Activated CD8-positive, alpha-beta T cell treated with anti-CD3 and anti-CD28 coated beads for 36 hours (primary cell): ENCODE measurements at regions of chr3 and their contacts with region 1.

Region 1: GRCh38 chr3:4633078-4634004 is 140.2 kb downstream of the ITPR1 start:
- DNase-seq: no peak
- ATAC-seq: peak; percentile 65
- H3K4me3 Mint-ChIP-seq: no peak overlapping the region
- H3K27ac Mint-ChIP-seq: peak overlapping the region; percentile 36
- H3K4me1 Mint-ChIP-seq: peaks cover 7% of the 10 kb centered on the region
- H3K27me3 Mint-ChIP-seq: no peaks in the 10 kb centered on the region
- CTCF ChIP-seq: peak; percentile 95

Region 2: DNA sequence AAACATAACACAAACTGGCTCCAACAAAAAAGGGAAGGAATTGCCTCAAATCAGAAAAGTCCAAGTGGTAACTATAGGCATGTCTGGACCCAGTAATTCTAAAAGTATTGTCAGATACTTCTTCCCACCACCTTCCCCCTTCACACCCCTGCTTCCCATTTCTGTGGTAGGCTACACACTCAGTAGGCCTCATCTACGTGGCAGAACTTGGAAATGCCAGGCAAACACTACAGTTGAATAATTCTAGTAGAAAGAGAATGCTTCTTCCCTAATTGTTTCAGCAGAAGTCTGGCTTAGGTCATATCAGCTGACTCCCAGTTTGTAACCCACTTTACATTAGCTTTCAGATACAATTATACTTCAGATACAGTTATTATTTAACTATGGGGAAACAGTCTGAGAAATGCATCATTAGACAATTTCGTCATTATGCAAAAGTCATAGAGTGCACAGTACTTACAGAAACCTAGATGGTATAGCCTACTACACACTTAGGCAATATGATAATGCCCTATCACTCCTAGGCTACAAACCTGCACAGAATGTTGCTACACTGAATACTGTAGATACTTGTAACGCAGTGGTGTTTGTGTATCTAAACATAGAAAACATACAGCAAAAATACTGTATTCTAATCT is 323.7 kb before region 1 on chr3:
- CTCF ChIA-PET with region 1: interaction called, 13 read pairs
- POLR2A ChIA-PET with region 1: no interaction called
- intact Hi-C with region 1: no loop called
- DNase-seq: no peak
- ATAC-seq: no peak
- H3K4me3 Mint-ChIP-seq: no peak overlapping the region
- H3K27ac Mint-ChIP-seq: no peak overlapping the region
- H3K4me1 Mint-ChIP-seq: peaks cover 22% of the 10 kb centered on the region
- H3K27me3 Mint-ChIP-seq: no peaks in the 10 kb centered on the region
- CTCF ChIP-seq: no peak

Region 3: DNA sequence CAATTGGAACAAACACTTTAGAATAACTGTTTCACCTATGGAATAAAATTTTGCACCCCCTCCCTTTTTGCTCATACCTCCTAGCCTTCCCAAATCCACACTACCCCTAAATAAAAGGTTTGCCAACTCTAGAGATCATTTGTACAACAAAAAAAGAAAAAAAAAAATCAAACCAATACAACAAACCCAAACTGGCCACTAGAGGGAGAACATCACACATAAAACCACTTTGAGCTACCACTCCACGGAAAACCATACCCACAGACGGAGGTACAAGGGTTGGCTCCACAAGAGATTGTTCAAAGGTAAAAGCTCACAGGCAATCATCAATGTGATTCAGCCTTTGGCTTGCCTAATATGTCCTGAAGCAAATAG is 282.6 kb before region 1 on chr3:
- CTCF ChIA-PET with region 1: interaction called, 68 read pairs
- POLR2A ChIA-PET with region 1: interaction called, 5 read pairs
- intact Hi-C with region 1: loop called (anchors 1 kb)
- DNase-seq: peak; percentile 60
- ATAC-seq: peak; percentile 71
- H3K4me3 Mint-ChIP-seq: peak overlapping the region; percentile 67
- H3K27ac Mint-ChIP-seq: peak overlapping the region; percentile 40
- H3K4me1 Mint-ChIP-seq: peaks cover 19% of the 10 kb centered on the region
- H3K27me3 Mint-ChIP-seq: no peaks in the 10 kb centered on the region
- CTCF ChIP-seq: peak; percentile 93

Region 4: DNA sequence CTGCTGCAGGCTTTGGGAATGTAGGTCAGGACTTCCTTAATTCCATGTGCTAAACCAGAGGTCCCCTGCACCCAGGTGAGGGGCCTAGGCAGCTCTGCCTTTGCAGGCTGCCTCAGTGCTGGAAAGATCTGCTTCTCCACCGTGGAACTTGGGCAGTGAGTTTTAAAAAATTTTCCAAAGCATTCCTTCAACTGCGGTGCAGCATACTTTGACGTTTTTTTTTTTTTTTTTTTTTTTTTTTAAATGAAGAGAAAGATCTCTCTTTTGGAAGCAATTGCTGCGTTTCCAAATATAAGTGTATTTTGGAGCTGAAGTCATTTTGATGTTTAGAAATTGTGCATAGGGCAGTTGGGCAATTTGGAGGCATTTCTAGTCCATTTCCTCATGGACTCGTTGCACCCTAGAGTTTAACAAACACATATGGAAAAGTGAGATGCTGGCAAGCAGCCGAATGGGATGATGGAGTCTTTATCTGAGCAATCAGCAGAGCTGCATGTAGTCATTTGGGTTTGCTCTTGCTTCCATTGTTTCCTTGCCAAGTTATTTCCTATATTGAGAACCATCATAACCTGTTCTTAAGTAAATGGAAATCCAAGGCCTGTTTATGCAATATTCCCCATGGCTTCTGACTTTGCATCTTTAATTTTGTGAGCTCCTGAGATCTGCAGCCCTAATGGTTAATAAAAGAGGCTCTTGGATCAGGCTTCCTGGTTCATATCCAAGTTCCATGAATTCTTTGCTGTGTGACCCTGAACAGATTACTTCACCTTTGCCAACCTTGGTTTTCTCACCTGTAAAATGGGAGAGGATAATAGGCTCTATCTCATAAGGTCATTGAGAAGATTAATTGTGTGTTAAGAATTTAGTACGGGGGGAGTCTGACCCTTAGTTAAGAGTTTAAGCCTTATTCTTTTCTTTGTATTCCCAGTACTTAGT is 109.0 kb before region 1 on chr3:
- CTCF ChIA-PET with region 1: interaction called, 131 read pairs
- POLR2A ChIA-PET with region 1: no interaction called
- intact Hi-C with region 1: loop called (anchors 1 kb)
- DNase-seq: no peak
- ATAC-seq: no peak
- H3K4me3 Mint-ChIP-seq: no peak overlapping the region
- H3K27ac Mint-ChIP-seq: no peak overlapping the region
- H3K4me1 Mint-ChIP-seq: peaks cover 20% of the 10 kb centered on the region
- H3K27me3 Mint-ChIP-seq: no peaks in the 10 kb centered on the region
- CTCF ChIP-seq: no peak

Region 5: DNA sequence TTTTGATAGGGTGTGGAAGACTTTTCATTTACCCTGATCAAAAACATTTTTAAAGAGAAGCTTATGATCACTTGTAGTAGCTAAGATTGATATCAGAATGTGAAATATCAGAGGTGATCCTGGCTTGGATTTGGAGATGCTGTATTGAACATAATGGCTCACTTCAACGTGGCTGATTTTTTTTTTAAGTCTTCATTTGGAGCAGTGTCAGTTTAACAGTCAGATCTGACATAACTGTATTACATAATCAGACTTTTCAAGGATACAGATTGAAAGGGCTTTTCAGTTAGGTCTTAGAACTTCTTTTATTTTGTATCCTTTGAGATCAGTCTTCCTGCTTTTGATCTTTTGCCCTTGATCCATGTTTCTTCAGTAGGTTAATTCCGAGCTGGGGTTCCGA is 41.7 kb before region 1 on chr3:
- CTCF ChIA-PET with region 1: interaction called, 15 read pairs
- POLR2A ChIA-PET with region 1: interaction called, 3 read pairs
- intact Hi-C with region 1: no loop called
- DNase-seq: no peak
- ATAC-seq: no peak
- H3K4me3 Mint-ChIP-seq: no peak overlapping the region
- H3K27ac Mint-ChIP-seq: no peak overlapping the region
- H3K4me1 Mint-ChIP-seq: peaks cover 50% of the 10 kb centered on the region
- H3K27me3 Mint-ChIP-seq: no peaks in the 10 kb centered on the region
- CTCF ChIP-seq: no peak

Region 6: GRCh38 chr3:4656059-4656458 is 22.7 kb after region 1 on chr3:
- CTCF ChIA-PET with region 1: interaction called, 16 read pairs
- POLR2A ChIA-PET with region 1: no interaction called
- intact Hi-C with region 1: no loop called
- DNase-seq: peak; percentile 30
- ATAC-seq: no peak
- H3K4me3 Mint-ChIP-seq: no peak overlapping the region
- H3K27ac Mint-ChIP-seq: no peak overlapping the region
- H3K4me1 Mint-ChIP-seq: no peaks in the 10 kb centered on the region
- H3K27me3 Mint-ChIP-seq: no peaks in the 10 kb centered on the region
- CTCF ChIP-seq: peak; percentile 26

Region 7: DNA sequence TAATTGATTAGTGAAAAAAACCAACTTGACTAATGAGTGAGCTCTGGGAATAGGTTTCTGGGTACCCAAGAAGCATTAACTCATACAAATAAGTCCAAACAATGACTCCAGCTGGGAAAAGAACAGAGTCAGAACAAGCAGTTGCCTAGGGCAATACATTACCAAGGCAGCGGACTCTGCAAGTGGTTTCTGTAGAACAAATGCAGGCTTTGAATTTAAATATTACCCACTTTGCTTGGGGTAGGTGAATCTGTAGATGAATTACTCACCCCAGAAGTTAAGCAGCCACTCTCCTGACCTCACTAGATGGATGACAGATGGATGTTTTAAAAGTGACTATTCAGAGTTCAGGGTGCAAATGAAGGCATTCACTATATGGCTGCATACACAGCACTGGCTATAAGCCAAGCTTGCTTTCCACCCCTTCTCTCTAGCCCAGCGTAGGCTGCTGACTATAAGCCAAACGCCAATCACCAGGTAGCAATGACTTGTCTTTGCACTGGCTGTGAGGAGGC is 272.8 kb after region 1 on chr3:
- CTCF ChIA-PET with region 1: no interaction called
- POLR2A ChIA-PET with region 1: no interaction called
- intact Hi-C with region 1: no loop called
- DNase-seq: peak; percentile 35
- ATAC-seq: peak; percentile 73
- H3K4me3 Mint-ChIP-seq: no peak overlapping the region
- H3K27ac Mint-ChIP-seq: no peak overlapping the region
- H3K4me1 Mint-ChIP-seq: peaks cover 68% of the 10 kb centered on the region
- H3K27me3 Mint-ChIP-seq: no peaks in the 10 kb centered on the region
- CTCF ChIP-seq: no peak

Region 8: GRCh38 chr3:4935347-4935746 is 302.0 kb after region 1 on chr3:
- CTCF ChIA-PET with region 1: no interaction called
- POLR2A ChIA-PET with region 1: no interaction called
- intact Hi-C with region 1: no loop called
- DNase-seq: peak; percentile 51
- ATAC-seq: peak; percentile 78
- H3K4me3 Mint-ChIP-seq: no peak overlapping the region
- H3K27ac Mint-ChIP-seq: peak overlapping the region; percentile 37
- H3K4me1 Mint-ChIP-seq: peaks cover 22% of the 10 kb centered on the region
- H3K27me3 Mint-ChIP-seq: no peaks in the 10 kb centered on the region
- CTCF ChIP-seq: no peak